ENCODE measurements at regions of chr4 and their contacts with region 1.

Region 1: GRCh38 chr4:84632092-84632491 is 49.2 kb downstream of the CDS1 start:
- DNase-seq: peak; percentile 86
- H3K4me3 Mint-ChIP-seq: peak overlapping the region; percentile 50
- H3K27ac Mint-ChIP-seq: peak overlapping the region; percentile 91
- H3K4me1 Mint-ChIP-seq: peaks cover 11% of the 10 kb centered on the region
- H3K27me3 Mint-ChIP-seq: no peaks in the 10 kb centered on the region
- CTCF ChIP-seq: no peak

Region 2: DNA sequence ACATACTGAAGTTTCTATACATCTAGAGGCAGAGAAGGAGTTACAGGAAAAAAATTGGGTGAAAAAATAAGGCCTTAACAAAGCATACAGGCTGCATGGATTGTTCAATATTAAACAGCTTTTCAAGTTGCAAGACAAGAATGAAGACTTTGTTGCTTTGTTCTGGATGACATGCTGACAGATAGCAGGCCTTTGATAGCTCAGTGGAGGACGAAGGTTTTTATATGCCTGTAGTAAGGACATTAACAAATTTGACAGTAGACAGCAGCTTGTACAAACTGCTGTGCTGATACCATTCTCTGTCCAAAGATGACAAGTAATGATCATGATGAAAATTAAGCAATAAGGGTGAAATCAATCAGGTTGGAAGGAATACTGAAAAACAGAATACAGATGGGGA is 442.9 kb before region 1 on chr4:
- CTCF ChIA-PET with region 1: no interaction called
- POLR2A ChIA-PET with region 1: no interaction called
- intact Hi-C with region 1: no loop called
- DNase-seq: no peak
- H3K4me3 Mint-ChIP-seq: no peak overlapping the region
- H3K27ac Mint-ChIP-seq: no peak overlapping the region
- H3K4me1 Mint-ChIP-seq: no peaks in the 10 kb centered on the region
- H3K27me3 Mint-ChIP-seq: peaks cover 11% of the 10 kb centered on the region
- CTCF ChIP-seq: no peak

Region 3: DNA sequence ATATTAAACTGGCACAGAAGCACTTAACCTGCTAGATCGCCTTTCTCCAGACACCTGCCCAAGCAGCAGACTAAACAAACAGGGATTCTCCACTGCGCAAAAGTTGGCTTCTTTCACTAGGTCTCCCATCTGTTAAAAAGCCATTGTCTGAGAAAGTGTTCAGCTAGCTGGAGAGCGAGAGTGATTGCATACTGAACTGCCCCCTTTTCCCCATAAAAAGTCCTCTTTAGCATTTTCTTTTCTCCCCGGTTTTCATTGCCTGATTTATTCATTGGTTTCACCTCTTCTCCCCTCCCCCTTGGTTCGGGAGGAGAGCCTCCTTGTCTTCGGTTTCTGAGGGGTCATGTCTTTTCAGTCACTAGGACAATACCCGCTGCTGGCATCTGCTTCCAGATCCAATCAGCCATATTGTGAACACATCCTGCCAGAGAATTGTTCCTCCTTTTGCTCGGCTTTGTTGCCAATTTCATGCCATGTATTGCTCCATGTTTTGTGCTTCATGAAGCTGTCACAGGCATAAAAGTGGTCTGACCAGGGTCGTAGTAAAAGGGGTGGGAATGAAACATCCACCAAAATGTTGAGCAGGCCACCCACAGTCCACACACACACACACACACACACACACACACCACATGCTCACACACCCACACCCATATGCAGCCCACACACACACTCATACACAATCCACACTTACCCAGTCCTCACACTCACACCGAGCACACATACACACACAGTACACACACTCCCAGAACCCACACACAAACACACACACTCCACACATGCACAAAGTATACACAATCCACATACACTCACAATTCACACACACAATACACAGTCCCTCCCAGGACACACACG is 269.1 kb before region 1 on chr4:
- CTCF ChIA-PET with region 1: no interaction called
- POLR2A ChIA-PET with region 1: no interaction called
- intact Hi-C with region 1: no loop called
- DNase-seq: no peak
- H3K4me3 Mint-ChIP-seq: no peak overlapping the region
- H3K27ac Mint-ChIP-seq: no peak overlapping the region
- H3K4me1 Mint-ChIP-seq: no peaks in the 10 kb centered on the region
- H3K27me3 Mint-ChIP-seq: peaks cover 13% of the 10 kb centered on the region
- CTCF ChIP-seq: no peak

Region 4: DNA sequence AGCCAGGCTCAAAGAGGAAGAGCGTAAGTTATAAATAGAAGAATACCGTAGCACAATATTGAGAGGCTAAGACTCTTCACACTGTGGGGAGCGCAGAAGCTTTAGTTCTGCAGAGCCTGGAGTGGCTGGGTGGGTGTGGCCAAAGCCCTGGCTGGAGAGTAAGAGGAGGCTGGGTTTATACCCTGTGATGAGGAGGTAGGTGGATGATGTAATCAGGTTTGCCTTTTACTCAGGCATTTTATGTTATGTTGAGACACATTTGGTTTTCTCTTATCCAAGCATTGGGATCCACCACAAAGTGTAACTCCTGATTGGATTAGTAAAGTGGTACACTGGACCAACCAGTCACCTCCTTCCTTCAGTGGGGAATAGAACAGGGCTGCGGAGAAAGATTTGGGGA is 35.3 kb before region 1 on chr4:
- CTCF ChIA-PET with region 1: interaction called, 4 read pairs
- POLR2A ChIA-PET with region 1: interaction called, 11 read pairs
- intact Hi-C with region 1: no loop called
- DNase-seq: peak; percentile 84
- H3K4me3 Mint-ChIP-seq: no peak overlapping the region
- H3K27ac Mint-ChIP-seq: peak overlapping the region; percentile 65
- H3K4me1 Mint-ChIP-seq: peaks cover 19% of the 10 kb centered on the region
- H3K27me3 Mint-ChIP-seq: no peaks in the 10 kb centered on the region
- CTCF ChIP-seq: no peak

Region 5: DNA sequence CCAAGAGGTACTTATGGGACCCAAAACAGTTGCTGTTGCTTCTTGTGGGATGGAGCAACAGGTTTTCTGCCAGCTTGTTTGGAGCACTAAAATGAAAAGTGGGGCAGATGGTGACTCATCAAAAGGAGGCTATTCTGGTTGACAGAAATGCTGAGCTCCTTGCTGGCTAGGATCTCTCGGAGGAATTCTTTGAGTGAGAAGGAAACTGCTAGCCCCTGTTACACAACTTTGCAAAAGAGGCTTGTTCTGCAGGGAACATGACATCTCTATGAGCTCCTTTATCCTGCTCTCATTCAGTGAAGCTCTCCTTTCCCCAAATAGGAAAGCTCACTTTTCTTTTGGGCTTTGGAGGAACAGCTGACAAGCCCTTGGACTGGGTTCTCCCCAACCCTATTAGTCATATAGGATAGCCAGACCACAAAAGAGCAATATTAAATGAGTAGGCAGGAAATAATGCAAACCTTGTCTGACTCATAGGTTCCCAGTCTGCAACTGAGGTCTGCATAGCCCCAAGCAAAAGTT is 59.1 kb after region 1 on chr4:
- CTCF ChIA-PET with region 1: interaction called, 3 read pairs
- POLR2A ChIA-PET with region 1: interaction called, 14 read pairs
- intact Hi-C with region 1: loop called (anchors 5 kb)
- DNase-seq: peak; percentile 93
- H3K4me3 Mint-ChIP-seq: peak overlapping the region; percentile 60
- H3K27ac Mint-ChIP-seq: peak overlapping the region; percentile 94
- H3K4me1 Mint-ChIP-seq: peaks cover 16% of the 10 kb centered on the region
- H3K27me3 Mint-ChIP-seq: no peaks in the 10 kb centered on the region
- CTCF ChIP-seq: no peak

Measured in MCF 10A (cell line).